ENCODE measurements at regions of chr11 and their contacts with region 1.

Region 1: GRCh38 chr11:66694732-66695207 is 17.1 kb upstream of the RBM4B start:
- DNase-seq: peak; percentile 90 to 92
- ATAC-seq: peak; percentile 99

Region 2: GRCh38 chr11:66835768-66836405 is 141.1 kb after region 1 on chr11:
- intact Hi-C with region 1: loop called (anchors 2 to 10 kb)
- DNase-seq: no peak
- ATAC-seq: no peak

Measured in left colon (tissue), 2 donors.